Astrocyte of the cerebellum (primary cell): ENCODE measurements at regions of chr9 and their contacts with region 1.

Region 1: GRCh38 chr9:7580568-7580967 is 219.0 kb downstream of the DMAC1 start:
- DNase-seq: no peak
- H3K4me3 ChIP-seq: no peak overlapping the region
- CTCF ChIP-seq: no peak

Region 2: DNA sequence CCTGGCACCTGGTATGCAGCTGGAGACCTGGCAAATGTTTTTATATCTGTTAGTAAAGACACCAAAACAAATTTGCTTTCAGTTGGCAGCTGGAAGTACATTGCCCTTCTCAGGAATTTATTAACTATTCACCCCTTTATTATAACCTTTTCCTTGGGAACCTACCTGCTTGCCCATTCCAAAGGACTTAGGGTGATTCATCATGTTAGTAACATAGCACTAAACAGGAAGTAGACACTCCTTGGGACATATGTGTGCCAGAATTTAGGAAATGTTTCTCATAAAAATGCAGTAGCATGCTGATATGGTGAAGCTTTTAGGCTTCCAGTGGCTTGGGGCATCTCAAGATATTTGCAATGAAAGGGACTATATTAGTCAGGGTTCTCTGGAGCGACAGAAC is 34.8 kb after region 1 on chr9:
- in situ Hi-C with region 1: loop called (anchors 5 kb)
- DNase-seq: no peak
- H3K4me3 ChIP-seq: no peak overlapping the region
- CTCF ChIP-seq: no peak

Region 3: GRCh38 chr9:7640231-7640630 is 59.7 kb after region 1 on chr9:
- in situ Hi-C with region 1: no loop called
- DNase-seq: no peak
- H3K4me3 ChIP-seq: no peak overlapping the region
- CTCF ChIP-seq: no peak